ENCODE measurements at regions of chr2 and their contacts with region 1.

Region 1: GRCh38 chr2:30711646-30712085 is 95.6 kb downstream of the CAPN13 start:
- DNase-seq: peak; percentile 68 to 93
- H3K4me3 ChIP-seq: no peak overlapping the region
- H3K27ac ChIP-seq: no peak overlapping the region
- H3K4me1 ChIP-seq: no peaks in the 10 kb centered on the region
- H3K27me3 ChIP-seq: no peaks in the 10 kb centered on the region
- CTCF ChIP-seq: peak; percentile 95 to 100 (median 100)
- EP300 ChIP-seq: no peak
- POLR2A ChIP-seq: no peak
- RAD21 ChIP-seq: peak; percentile 91 to 94

Region 2: GRCh38 chr2:30165050-30165520 is 546.6 kb before region 1 on chr2:
- CTCF ChIA-PET with region 1: interaction called, 228 read pairs
- POLR2A ChIA-PET with region 1: no interaction called
- DNase-seq: peak in 1 of 2 experiments; percentile 46
- H3K4me3 ChIP-seq: no peak overlapping the region
- H3K27ac ChIP-seq: no peak overlapping the region
- H3K4me1 ChIP-seq: peaks cover 0 to 4% (median 0%) of the 10 kb centered on the region in 4 experiments; a peak in 1 of 7 replicates
- H3K27me3 ChIP-seq: no peaks in the 10 kb centered on the region; a peak in 1 of 7 replicates
- CTCF ChIP-seq: peak; percentile 60 to 98 (median 90)
- EP300 ChIP-seq: no peak
- POLR2A ChIP-seq: no peak
- RAD21 ChIP-seq: peak; percentile 89 to 91

Region 3: DNA sequence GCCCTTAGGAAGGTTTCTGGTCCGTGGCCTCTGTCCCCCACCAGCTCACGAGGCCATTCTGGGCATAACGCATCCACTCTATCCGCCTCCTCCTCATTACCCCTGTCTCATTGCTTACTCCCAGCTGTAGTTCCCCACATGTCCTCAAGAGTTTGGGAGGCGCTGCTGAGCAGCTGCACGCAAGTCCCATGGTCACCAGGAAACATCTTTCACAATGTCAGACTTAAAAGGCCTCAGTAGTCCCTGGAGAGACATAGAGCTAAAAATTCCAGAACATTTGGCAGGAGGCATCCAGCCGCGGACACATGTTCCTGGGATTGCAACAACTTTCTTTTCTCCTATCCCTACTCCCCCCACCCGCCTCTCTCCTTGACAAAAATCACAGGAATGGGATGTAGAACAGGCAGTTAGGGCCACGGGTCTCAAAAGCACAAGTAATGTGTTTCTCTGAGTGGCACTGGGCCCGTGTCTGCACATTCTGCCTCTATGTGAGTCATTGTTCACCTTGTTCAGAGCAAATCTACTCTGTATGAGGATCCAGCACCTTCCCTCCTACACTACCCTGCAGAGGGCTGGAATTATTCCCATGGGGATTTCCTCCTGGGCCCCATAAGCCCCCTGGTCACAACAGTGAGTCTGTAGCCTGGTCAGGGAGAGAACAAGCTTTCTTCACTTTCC is 472.2 kb before region 1 on chr2:
- CTCF ChIA-PET with region 1: interaction called, 15 read pairs
- POLR2A ChIA-PET with region 1: no interaction called
- DNase-seq: peak in 1 of 2 experiments; percentile 88
- H3K4me3 ChIP-seq: no peak overlapping the region
- H3K27ac ChIP-seq: no peak overlapping the region
- H3K4me1 ChIP-seq: no peaks in the 10 kb centered on the region
- H3K27me3 ChIP-seq: no peaks in the 10 kb centered on the region
- CTCF ChIP-seq: peak; percentile 81 to 99 (median 93)
- EP300 ChIP-seq: no peak
- POLR2A ChIP-seq: no peak
- RAD21 ChIP-seq: peak; percentile 71 to 82

Region 4: DNA sequence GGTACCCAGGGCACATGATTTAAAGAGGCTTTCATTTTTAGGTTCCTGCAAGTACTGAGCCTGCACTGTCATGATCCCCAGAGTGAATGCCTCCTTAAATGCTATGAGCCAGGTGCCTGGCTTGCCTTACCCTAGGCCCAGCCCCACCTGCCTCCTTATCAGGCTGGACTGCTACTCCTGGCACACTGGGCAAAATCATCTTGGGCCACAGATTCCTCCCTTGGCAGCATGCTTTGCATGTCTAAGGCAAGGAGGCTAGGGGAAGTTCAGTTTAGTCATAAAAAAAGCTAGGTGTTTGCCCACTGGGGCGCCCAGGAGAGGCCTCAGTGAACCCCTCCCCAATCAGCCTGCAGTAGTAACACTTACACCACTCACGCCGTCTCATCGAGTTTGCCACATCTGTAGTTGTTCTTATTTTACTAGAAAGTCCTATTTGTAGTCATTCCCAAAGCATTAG is 435.2 kb before region 1 on chr2:
- CTCF ChIA-PET with region 1: no interaction called
- POLR2A ChIA-PET with region 1: no interaction called
- DNase-seq: no peak
- H3K4me3 ChIP-seq: no peak overlapping the region
- H3K27ac ChIP-seq: no peak overlapping the region
- H3K4me1 ChIP-seq: no peaks in the 10 kb centered on the region
- H3K27me3 ChIP-seq: no peaks in the 10 kb centered on the region; a peak in 1 of 7 replicates
- CTCF ChIP-seq: no peak
- EP300 ChIP-seq: no peak
- POLR2A ChIP-seq: no peak
- RAD21 ChIP-seq: no peak

Region 5: DNA sequence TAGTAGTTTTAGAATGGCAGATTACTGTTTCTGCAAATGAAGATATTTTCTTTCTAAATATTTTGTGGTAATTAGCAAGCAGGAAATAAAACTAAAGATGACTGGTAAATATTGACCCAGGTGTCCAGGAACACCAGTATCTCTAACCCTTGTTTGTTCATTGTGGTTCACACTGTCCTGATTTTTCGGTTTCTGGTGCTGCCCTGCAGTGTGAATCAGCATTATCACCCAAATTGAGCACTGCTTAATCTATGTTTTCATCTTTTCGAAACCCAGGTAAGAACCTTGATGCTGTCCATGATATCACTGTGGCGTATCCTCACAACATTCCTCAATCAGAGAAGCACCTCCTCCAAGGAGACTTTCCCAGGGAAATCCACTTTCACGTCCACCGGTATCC is 71.8 kb before region 1 on chr2:
- CTCF ChIA-PET with region 1: no interaction called
- POLR2A ChIA-PET with region 1: no interaction called
- DNase-seq: no peak
- H3K4me3 ChIP-seq: no peak overlapping the region
- H3K27ac ChIP-seq: no peak overlapping the region
- H3K4me1 ChIP-seq: peaks cover 0 to 3% (median 0%) of the 10 kb centered on the region in 4 experiments; a peak in 2 of 7 replicates
- H3K27me3 ChIP-seq: no peaks in the 10 kb centered on the region
- CTCF ChIP-seq: no peak
- EP300 ChIP-seq: no peak
- POLR2A ChIP-seq: no peak
- RAD21 ChIP-seq: no peak

Region 6: DNA sequence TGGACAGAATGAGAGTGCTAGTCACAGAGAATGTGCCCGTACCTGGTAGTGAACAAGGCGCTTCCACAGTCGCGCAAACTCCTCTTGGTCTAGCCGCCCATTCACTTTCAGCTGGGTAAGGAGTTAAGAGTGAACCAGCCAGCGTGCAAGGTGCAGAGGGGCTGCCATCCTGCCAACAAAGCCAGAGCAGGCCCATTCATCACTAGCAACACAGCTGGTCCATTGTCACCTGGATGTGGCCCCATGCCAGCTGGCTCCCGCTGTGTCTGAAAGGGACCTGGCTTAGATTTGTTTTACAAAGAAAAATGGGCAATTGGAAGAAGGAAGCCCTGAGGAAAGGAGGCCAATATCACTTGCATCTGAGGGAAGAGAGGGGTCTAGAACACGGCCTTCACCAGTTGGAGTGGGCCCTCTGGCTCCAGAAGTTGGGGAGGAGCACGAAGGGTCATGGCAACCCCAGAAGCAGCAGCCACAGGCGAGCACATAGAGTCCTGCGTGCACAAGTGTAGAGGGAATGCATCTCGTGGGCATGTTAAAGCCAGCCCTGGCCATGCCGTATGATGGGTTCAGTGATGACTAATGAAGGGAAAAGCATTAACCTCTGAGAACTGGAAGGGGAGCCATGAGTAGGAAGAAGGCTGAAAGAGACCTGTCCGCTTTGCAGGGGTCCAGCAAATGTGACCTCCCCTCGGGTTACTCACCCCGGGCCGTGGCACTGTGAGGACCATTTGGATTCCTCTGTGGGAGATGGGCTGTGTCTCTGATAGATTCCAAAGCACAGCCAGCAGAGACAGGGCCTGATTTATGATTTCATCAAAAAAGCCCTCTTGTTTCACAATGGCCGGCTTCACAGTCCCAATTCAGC is 25.0 kb after region 1 on chr2:
- CTCF ChIA-PET with region 1: interaction called, 16 read pairs
- POLR2A ChIA-PET with region 1: no interaction called
- DNase-seq: no peak
- H3K4me3 ChIP-seq: no peak overlapping the region
- H3K27ac ChIP-seq: no peak overlapping the region
- H3K4me1 ChIP-seq: peaks cover 0 to 2% (median 0%) of the 10 kb centered on the region in 4 experiments; a peak in 1 of 7 replicates
- H3K27me3 ChIP-seq: no peaks in the 10 kb centered on the region
- CTCF ChIP-seq: no peak
- EP300 ChIP-seq: no peak
- POLR2A ChIP-seq: no peak
- RAD21 ChIP-seq: no peak

Region 7: DNA sequence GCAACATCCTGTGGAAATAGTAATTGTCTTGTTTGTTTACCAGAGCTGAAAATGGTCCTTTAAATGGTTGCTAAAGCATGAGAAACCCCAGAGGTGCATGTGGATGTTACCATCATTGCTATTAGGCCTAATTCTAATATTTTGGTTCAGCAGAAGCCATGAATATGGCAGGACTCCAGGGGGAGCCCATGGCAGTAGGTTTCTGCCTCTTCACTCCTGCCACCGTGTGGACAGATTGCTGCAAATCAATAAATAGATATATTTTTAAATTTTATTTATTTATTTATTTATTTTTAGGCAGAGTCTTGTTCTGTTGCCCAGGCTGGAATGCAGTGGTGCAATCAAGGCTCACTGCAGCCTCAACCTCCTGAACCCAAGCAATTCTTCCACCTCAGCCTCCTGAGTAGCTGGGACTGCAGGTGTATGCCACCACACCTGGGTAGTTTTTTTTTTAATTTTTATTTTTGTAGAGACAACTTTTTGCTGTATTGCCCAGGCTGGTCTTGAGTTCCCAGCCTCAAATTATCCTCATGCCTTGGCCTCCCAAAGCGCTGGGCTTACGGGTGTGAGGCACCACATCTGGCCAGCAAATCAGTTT is 150.5 kb after region 1 on chr2:
- CTCF ChIA-PET with region 1: interaction called, 167 read pairs
- POLR2A ChIA-PET with region 1: no interaction called
- DNase-seq: peak; percentile 41 to 53
- H3K4me3 ChIP-seq: no peak overlapping the region
- H3K27ac ChIP-seq: no peak overlapping the region
- H3K4me1 ChIP-seq: no peaks in the 10 kb centered on the region
- H3K27me3 ChIP-seq: no peaks in the 10 kb centered on the region
- CTCF ChIP-seq: peak; percentile 61 to 99 (median 70)
- EP300 ChIP-seq: no peak
- POLR2A ChIP-seq: no peak
- RAD21 ChIP-seq: peak; percentile 74 to 78

Region 8: GRCh38 chr2:31138037-31138962 is 426.6 kb after region 1 on chr2 and contains the start of gene GALNT14:
- CTCF ChIA-PET with region 1: interaction called, 10 read pairs
- POLR2A ChIA-PET with region 1: no interaction called
- DNase-seq: peak; percentile 33 to 86
- H3K4me3 ChIP-seq: peak within 1 kb of the TSS; percentile 33 to 63 (median 43)
- H3K27ac ChIP-seq: no peak within 1 kb of the TSS
- H3K4me1 ChIP-seq: peaks cover 0 to 5% (median 5%) of the 10 kb centered on the region in 4 experiments; a peak in 4 of 7 replicates
- H3K27me3 ChIP-seq: peaks cover 13 to 50% (median 46%) of the 10 kb centered on the region in 4 experiments
- CTCF ChIP-seq: peak; percentile 41 to 57 (median 47)
- EP300 ChIP-seq: peak in 1 of 2 experiments; percentile 68; a peak in 1 of 3 replicates
- POLR2A ChIP-seq: no peak
- RAD21 ChIP-seq: peak; percentile 38 to 42
- total RNA-seq, gene GALNT14: 10.3 and 13.7 TPM in 2 replicates

Measured in H1 (cell line).